Right cardiac atrium (tissue), 5 donors: ENCODE measurements at regions of chr7 and their contacts with region 1.

Region 1: GRCh38 chr7:120987683-120988590 is 574 bp upstream of the CPED1 start:
- DNase-seq: peak; percentile 93 to 97 (median 94)
- ATAC-seq: peak; percentile 93
- H3K4me3 ChIP-seq: peak overlapping the region; percentile 99
- H3K27ac ChIP-seq: peak overlapping the region; percentile 96
- H3K4me1 ChIP-seq: no peaks in the 10 kb centered on the region
- H3K27me3 ChIP-seq: no peaks in the 10 kb centered on the region

Region 2: GRCh38 chr7:120842121-120842621 is 145.8 kb before region 1 on chr7:
- intact Hi-C with region 1: no loop called
- DNase-seq: no peak
- ATAC-seq: no peak
- H3K4me3 ChIP-seq: no peak overlapping the region
- H3K27ac ChIP-seq: no peak overlapping the region
- H3K4me1 ChIP-seq: peaks cover 2% of the 10 kb centered on the region
- H3K27me3 ChIP-seq: no peaks in the 10 kb centered on the region

Region 3: DNA sequence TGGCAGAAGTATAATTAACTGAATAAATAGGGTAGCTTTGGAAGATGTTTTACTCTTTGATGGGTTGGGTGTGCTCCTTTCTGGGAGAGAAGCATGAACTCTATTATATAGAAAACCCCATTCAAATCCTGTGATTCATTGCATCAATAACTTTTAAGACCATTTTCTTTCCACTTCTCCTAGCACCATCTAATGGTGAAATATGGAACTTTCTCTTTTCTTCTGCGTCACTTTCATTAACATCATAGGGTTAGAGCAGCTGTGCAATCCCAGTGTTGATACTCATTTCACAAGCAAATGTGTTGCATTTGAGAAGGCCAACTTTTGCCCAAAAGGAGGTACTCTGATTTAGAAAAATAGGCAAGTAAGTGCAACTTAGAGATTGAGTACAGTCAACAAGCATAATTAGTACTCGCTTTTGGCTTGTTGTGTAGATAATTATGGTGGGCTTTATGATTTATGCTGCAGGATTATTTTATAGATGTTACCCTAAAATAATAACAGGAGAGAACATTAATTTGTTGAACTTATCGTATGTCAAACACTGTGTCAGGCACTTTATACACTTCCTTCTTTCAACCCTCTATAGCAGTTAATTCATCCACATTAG is 93.5 kb after region 1 on chr7:
- intact Hi-C with region 1: loop called in 3 of 4 experiments (anchors 2 to 5 kb)
- DNase-seq: no peak
- ATAC-seq: peak; percentile 66 to 70
- H3K4me3 ChIP-seq: no peak overlapping the region
- H3K27ac ChIP-seq: no peak overlapping the region
- H3K4me1 ChIP-seq: peaks cover 4% of the 10 kb centered on the region
- H3K27me3 ChIP-seq: no peaks in the 10 kb centered on the region

Region 4: DNA sequence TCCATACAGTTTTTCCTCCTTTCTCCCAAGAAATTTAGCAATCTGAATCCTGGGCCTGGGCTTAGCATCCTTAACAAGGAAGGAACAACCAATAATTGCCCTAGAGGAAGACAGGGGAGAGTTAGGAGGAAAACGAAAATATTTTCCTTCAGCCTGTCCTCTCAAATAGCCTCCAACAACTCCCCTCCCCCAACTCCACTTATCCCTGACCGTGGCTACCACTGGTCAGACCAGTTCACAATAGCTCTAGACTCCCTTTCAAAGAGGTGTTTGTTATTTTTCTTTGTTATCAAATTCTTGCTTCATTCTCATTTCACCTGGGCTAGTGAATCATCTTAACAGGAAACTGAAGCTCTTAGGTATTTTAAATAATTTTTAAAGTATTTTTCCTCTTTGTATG is 114.7 kb after region 1 on chr7:
- intact Hi-C with region 1: loop called in 2 of 4 experiments (anchors 5 kb)
- DNase-seq: no peak
- ATAC-seq: no peak
- H3K4me3 ChIP-seq: no peak overlapping the region
- H3K27ac ChIP-seq: no peak overlapping the region
- H3K4me1 ChIP-seq: peaks cover 1% of the 10 kb centered on the region
- H3K27me3 ChIP-seq: no peaks in the 10 kb centered on the region

Region 5: DNA sequence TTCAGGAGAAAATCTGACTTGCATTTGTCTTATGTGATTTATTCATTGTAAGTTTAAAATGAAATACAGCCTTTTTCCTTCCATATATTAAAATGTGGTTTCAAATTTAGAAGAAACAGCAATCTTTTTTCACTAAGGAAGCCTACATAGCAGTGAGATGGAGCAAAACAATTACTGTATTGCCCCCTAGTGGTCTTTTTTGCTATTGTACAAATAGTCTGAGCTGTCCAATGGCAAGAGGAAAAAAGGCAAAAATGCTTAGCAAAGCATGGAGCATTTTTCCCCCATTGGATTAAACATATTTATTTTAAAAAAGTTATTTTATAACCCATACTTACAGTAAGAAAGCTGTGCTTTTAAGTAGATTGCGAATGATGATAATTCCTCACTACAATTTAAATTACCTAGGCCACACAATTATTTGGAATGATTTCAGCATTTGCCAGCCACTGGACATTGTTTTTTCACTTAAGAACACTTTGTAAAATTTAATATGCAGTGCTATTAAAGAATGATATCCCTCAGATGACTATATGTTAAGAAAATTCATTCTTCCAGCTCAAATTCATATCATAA is 120.1 kb after region 1 on chr7:
- intact Hi-C with region 1: loop called in 2 of 4 experiments (anchors 5 kb)
- DNase-seq: no peak
- ATAC-seq: peak; percentile 80 to 81
- H3K4me3 ChIP-seq: no peak overlapping the region
- H3K27ac ChIP-seq: no peak overlapping the region
- H3K4me1 ChIP-seq: peaks cover 1% of the 10 kb centered on the region
- H3K27me3 ChIP-seq: no peaks in the 10 kb centered on the region

Region 6: GRCh38 chr7:121595758-121596696 is 608.1 kb after region 1 on chr7:
- intact Hi-C with region 1: no loop called
- DNase-seq: no peak
- ATAC-seq: no peak
- H3K4me3 ChIP-seq: no peak overlapping the region
- H3K27ac ChIP-seq: no peak overlapping the region
- H3K4me1 ChIP-seq: no peaks in the 10 kb centered on the region
- H3K27me3 ChIP-seq: no peaks in the 10 kb centered on the region